ENCODE measurements at regions of chr16 and their contacts with region 1.

Region 1: GRCh38 chr16:53945996-53946395 is 242.0 kb downstream of the FTO start:
- DNase-seq: peak; percentile 64
- ATAC-seq: peak; percentile 74
- H3K4me3 ChIP-seq: no peak overlapping the region
- H3K27ac ChIP-seq: no peak overlapping the region
- H3K4me1 ChIP-seq: peaks cover 2% of the 10 kb centered on the region; the same call in 1 of the 2 replicates
- H3K27me3 ChIP-seq: no peaks in the 10 kb centered on the region
- CTCF ChIP-seq: peak; percentile 89
- POLR2A ChIP-seq: no peak
- RAD21 ChIP-seq: peak; percentile 90

Region 2: GRCh38 chr16:53773150-53773846 is 172.7 kb before region 1 on chr16:
- CTCF ChIA-PET with region 1: interaction called, 5 read pairs
- POLR2A ChIA-PET with region 1: no interaction called
- dilution Hi-C with region 1: no loop called
- in situ Hi-C with region 1: no loop called
- intact Hi-C with region 1: loop called (anchors 1 kb)
- DNase-seq: peak; percentile 79
- ATAC-seq: peak; percentile 46
- H3K4me3 ChIP-seq: no peak overlapping the region
- H3K27ac ChIP-seq: no peak overlapping the region
- H3K4me1 ChIP-seq: peaks cover 22% of the 10 kb centered on the region
- H3K27me3 ChIP-seq: no peaks in the 10 kb centered on the region
- CTCF ChIP-seq: peak; percentile 86
- POLR2A ChIP-seq: no peak
- RAD21 ChIP-seq: peak; percentile 92

Region 3: GRCh38 chr16:54936979-54937670 is 991.1 kb after region 1 on chr16:
- CTCF ChIA-PET with region 1: no interaction called
- POLR2A ChIA-PET with region 1: no interaction called
- dilution Hi-C with region 1: no loop called
- in situ Hi-C with region 1: no loop called
- intact Hi-C with region 1: loop called (anchors 5 kb)
- DNase-seq: no peak
- ATAC-seq: no peak
- H3K4me3 ChIP-seq: no peak overlapping the region
- H3K27ac ChIP-seq: no peak overlapping the region
- H3K4me1 ChIP-seq: no peaks in the 10 kb centered on the region
- H3K27me3 ChIP-seq: peaks cover 89% of the 10 kb centered on the region
- CTCF ChIP-seq: 0 out of 2 replicates have a peak, but pooled peaks have one; percentile 20
- POLR2A ChIP-seq: no peak
- RAD21 ChIP-seq: peak; percentile 10; the same call in 1 of the 2 replicates

Region 4: GRCh38 chr16:55370762-55371482 is 1424.9 kb after region 1 on chr16:
- CTCF ChIA-PET with region 1: no interaction called
- POLR2A ChIA-PET with region 1: no interaction called
- dilution Hi-C with region 1: no loop called
- in situ Hi-C with region 1: no loop called
- intact Hi-C with region 1: loop called (anchors 1 kb)
- DNase-seq: peak; percentile 8
- ATAC-seq: peak; percentile 81
- H3K4me3 ChIP-seq: no peak overlapping the region
- H3K27ac ChIP-seq: no peak overlapping the region
- H3K4me1 ChIP-seq: no peaks in the 10 kb centered on the region
- H3K27me3 ChIP-seq: peaks cover 19% of the 10 kb centered on the region
- CTCF ChIP-seq: peak; percentile 37
- POLR2A ChIP-seq: no peak
- RAD21 ChIP-seq: peak; percentile 43

Measured in IMR-90 (cell line).